CD4-positive, alpha-beta memory T cell (primary cell): ENCODE measurements at regions of chr5 and their contacts with region 1.

Region 1: GRCh38 chr5:36944607-36945225 is 68.1 kb downstream of the NIPBL start:
- DNase-seq: peak in 4 of 5 donors; percentile 35 to 57 (median 46)
- H3K4me3 ChIP-seq: no peak overlapping the region
- H3K4me3 Mint-ChIP-seq: peak overlapping the region in 1 of 8 donors; percentile 4
- H3K27ac ChIP-seq: no peak overlapping the region
- H3K27ac Mint-ChIP-seq: peak overlapping the region in 1 of 7 donors; percentile 41
- H3K4me1 ChIP-seq: peaks cover 27% of the 10 kb centered on the region
- H3K4me1 Mint-ChIP-seq: peaks cover 35 to 53% (median 48%) of the 10 kb centered on the region in 4 donors
- H3K27me3 ChIP-seq: no peaks in the 10 kb centered on the region
- H3K27me3 Mint-ChIP-seq: no peaks in the 10 kb centered on the region

Region 2: DNA sequence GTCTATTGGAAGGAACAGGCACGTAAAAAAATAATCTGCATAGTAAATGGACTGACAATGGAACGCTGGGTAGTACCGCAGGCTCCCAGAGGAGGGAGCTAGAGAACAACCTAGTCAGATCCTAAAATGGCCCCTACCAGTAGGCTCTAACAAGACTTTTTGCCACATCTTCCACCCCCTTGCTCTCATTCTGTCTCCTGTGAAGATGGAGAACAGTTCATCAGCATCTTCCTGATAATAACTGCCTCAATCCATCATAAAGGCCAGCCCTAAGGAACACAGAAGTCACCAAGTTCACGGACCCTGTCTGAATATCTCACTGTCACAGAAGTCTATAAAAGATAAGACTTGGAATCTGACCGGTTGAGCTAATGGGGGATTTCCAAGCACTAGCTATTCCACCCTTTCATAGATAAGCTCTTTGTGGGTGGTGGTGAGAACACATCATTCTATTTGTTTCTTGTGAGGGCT is 204.9 kb before region 1 on chr5:
- CTCF ChIA-PET with region 1: interaction called, 11 read pairs
- POLR2A ChIA-PET with region 1: no interaction called
- intact Hi-C with region 1: loop called (anchors 1 kb)
- DNase-seq: peak; percentile 51 to 62 (median 59)
- H3K4me3 ChIP-seq: no peak overlapping the region
- H3K4me3 Mint-ChIP-seq: no peak overlapping the region
- H3K27ac ChIP-seq: no peak overlapping the region
- H3K27ac Mint-ChIP-seq: no peak overlapping the region
- H3K4me1 ChIP-seq: peaks cover 11% of the 10 kb centered on the region
- H3K4me1 Mint-ChIP-seq: peaks cover 0 to 9% (median 4%) of the 10 kb centered on the region in 4 donors
- H3K27me3 ChIP-seq: peaks cover 9% of the 10 kb centered on the region
- H3K27me3 Mint-ChIP-seq: peaks cover 23 to 40% of the 10 kb centered on the region in 2 donors

Region 3: DNA sequence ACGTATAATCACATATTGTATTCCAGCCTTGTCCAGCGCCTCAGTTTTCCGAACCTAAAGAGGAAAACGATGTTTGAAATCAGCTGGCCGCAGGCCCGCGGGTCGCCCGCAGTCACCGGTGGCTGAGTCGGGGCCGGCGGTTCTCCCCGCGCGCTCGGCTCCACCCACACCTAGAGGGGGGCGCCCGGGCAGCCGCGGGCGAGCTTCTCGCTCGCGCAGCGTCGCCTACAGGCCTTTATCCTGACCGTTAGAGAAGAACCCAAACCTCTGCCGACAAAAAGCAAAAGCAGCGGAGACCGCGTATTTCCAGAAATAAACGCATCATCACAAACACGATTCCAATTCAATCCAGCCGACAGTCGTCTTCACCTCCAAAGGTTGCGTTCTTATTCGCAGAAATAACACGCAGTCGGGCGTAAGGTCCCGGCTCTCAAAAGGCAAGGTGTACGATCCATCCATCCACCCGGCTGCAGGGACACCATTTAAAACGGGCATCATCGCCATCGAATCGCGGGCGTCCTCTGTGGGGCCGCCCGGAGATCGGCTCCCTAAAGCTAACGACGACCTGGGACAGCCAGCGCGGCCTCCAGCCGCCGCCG is 68.8 kb before region 1 on chr5:
- CTCF ChIA-PET with region 1: interaction called, 5 read pairs
- POLR2A ChIA-PET with region 1: interaction called, 9 read pairs
- intact Hi-C with region 1: loop called (anchors 1 kb)
- DNase-seq: peak; percentile 74 to 80 (median 76)
- H3K4me3 ChIP-seq: peak overlapping the region; percentile 78 to 86
- H3K4me3 Mint-ChIP-seq: peak overlapping the region; percentile 89 to 99 (median 94)
- H3K27ac ChIP-seq: peak overlapping the region; percentile 93
- H3K27ac Mint-ChIP-seq: peak overlapping the region; percentile 92 to 97 (median 95)
- H3K4me1 ChIP-seq: peaks cover 62% of the 10 kb centered on the region
- H3K4me1 Mint-ChIP-seq: peaks cover 29 to 58% (median 38%) of the 10 kb centered on the region in 4 donors
- H3K27me3 ChIP-seq: no peaks in the 10 kb centered on the region
- H3K27me3 Mint-ChIP-seq: no peaks in the 10 kb centered on the region

Region 4: GRCh38 chr5:36932699-36933098 is 12.0 kb before region 1 on chr5:
- CTCF ChIA-PET with region 1: no interaction called
- POLR2A ChIA-PET with region 1: no interaction called
- intact Hi-C with region 1: loop called (anchors 1 kb)
- DNase-seq: no peak
- H3K4me3 ChIP-seq: no peak overlapping the region
- H3K4me3 Mint-ChIP-seq: peak overlapping the region in 1 of 8 donors; percentile 13
- H3K27ac ChIP-seq: no peak overlapping the region
- H3K27ac Mint-ChIP-seq: no peak overlapping the region
- H3K4me1 ChIP-seq: peaks cover 59% of the 10 kb centered on the region
- H3K4me1 Mint-ChIP-seq: peaks cover 59 to 90% (median 79%) of the 10 kb centered on the region in 4 donors
- H3K27me3 ChIP-seq: no peaks in the 10 kb centered on the region
- H3K27me3 Mint-ChIP-seq: no peaks in the 10 kb centered on the region

Region 5: GRCh38 chr5:36965179-36965578 is 20.5 kb after region 1 on chr5:
- CTCF ChIA-PET with region 1: no interaction called
- POLR2A ChIA-PET with region 1: no interaction called
- intact Hi-C with region 1: loop called (anchors 2 kb)
- DNase-seq: no peak
- H3K4me3 ChIP-seq: no peak overlapping the region
- H3K4me3 Mint-ChIP-seq: no peak overlapping the region
- H3K27ac ChIP-seq: no peak overlapping the region
- H3K27ac Mint-ChIP-seq: no peak overlapping the region
- H3K4me1 ChIP-seq: no peaks in the 10 kb centered on the region
- H3K4me1 Mint-ChIP-seq: peaks cover 0 to 2% (median 0%) of the 10 kb centered on the region in 4 donors
- H3K27me3 ChIP-seq: no peaks in the 10 kb centered on the region
- H3K27me3 Mint-ChIP-seq: no peaks in the 10 kb centered on the region